ENCODE measurements at regions of chr14 and their contacts with region 1.

Region 1: GRCh38 chr14:91323671-91324605 is 79.4 kb upstream of the GPR68 start:
- DNase-seq: peak; percentile 43
- H3K4me3 ChIP-seq: no peak overlapping the region
- H3K27ac ChIP-seq: no peak overlapping the region
- H3K4me1 ChIP-seq: no peaks in the 10 kb centered on the region
- H3K27me3 ChIP-seq: no peaks in the 10 kb centered on the region
- CTCF ChIP-seq: peak; percentile 79 to 92

Region 2: DNA sequence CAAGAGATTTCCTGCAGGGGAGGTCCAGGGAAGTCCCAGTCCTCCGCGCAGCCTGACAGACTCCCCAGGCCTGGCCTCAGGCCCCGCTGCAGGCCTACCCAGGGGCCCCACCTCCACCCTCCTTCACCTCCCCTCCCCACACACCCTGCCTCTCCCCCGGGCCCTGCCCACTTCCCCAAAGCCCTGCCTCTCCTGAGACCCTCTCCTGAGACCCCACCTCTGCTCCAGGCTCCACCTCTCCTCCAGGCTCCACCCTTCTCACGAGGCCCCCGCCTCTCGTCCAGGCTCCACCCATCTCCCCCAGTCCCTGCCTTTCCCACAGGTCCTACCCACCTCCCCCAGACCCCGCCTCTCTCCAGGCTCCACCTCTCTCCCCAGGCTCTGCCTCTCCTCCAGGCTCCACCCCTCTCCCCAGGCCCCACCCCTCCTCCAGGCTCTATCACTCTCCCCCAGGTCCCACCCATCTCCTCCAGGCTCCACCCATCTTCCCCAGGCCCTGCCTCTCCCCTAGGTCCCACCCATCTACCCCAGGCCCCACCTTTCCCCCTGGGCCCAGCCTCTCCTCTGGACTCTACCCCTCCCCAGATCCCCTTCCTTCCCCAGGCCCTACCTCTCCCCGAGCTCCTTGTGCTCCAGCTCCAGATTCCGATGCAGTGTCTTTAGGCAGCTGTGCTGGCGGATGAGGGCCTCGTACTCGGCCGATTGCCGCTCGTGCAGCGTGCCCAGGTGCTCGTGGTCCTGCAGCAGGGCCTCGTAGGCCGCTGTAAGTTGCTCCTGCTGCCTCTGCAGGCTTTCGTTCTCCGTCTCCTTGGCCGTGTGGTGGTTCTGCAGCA is 20.6 kb before region 1 on chr14:
- CTCF ChIA-PET with region 1: no interaction called
- dilution Hi-C with region 1: no loop called
- in situ Hi-C with region 1: no loop called
- intact Hi-C with region 1: no loop called
- DNase-seq: no peak
- H3K4me3 ChIP-seq: no peak overlapping the region
- H3K27ac ChIP-seq: no peak overlapping the region
- H3K4me1 ChIP-seq: no peaks in the 10 kb centered on the region
- H3K27me3 ChIP-seq: no peaks in the 10 kb centered on the region
- CTCF ChIP-seq: no peak

Region 3: GRCh38 chr14:91396959-91397815 is 73.2 kb after region 1 on chr14:
- CTCF ChIA-PET with region 1: no interaction called
- dilution Hi-C with region 1: no loop called
- in situ Hi-C with region 1: no loop called
- intact Hi-C with region 1: loop called (anchors 2 kb)
- DNase-seq: no peak
- H3K4me3 ChIP-seq: no peak overlapping the region
- H3K27ac ChIP-seq: no peak overlapping the region
- H3K4me1 ChIP-seq: peaks cover 16% of the 10 kb centered on the region
- H3K27me3 ChIP-seq: no peaks in the 10 kb centered on the region
- CTCF ChIP-seq: no peak

Region 4: DNA sequence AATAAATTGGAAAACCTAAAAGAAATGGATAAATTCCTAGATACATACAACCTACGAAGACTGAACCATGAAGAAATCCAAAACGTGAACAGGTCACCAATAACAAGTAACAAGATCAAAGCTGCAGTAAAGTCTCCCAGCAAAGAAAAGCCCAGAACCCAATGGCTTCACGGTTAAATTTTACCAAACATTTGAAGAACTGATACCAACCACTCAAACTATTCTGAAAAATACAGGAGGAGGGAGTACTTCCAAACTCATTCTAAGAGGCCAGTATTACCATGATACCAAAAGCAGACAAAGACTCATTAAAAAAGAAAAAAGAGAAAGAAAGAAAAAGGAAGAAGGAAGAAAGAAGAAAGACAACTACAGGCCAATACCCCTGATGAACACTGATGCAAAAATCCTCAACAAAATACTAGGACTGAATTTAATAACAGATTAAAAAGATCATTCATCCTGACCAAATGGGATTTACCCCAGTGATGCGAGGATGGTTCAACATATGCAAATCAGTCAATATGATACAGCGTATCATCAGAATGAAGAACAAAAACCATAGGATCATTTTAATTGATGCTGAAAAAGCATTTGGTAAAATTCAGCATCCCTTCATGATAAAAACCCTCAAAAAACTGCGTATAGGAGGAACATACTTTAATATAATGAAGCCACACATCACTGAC is 120.5 kb after region 1 on chr14:
- CTCF ChIA-PET with region 1: no interaction called
- dilution Hi-C with region 1: no loop called
- in situ Hi-C with region 1: loop called in 1 of 2 experiments (anchors 10 kb)
- intact Hi-C with region 1: no loop called
- DNase-seq: no peak
- H3K4me3 ChIP-seq: no peak overlapping the region
- H3K27ac ChIP-seq: no peak overlapping the region
- H3K4me1 ChIP-seq: no peaks in the 10 kb centered on the region
- H3K27me3 ChIP-seq: peaks cover 2% of the 10 kb centered on the region
- CTCF ChIP-seq: no peak

Region 5: GRCh38 chr14:91899212-91899611 is 575.3 kb after region 1 on chr14:
- CTCF ChIA-PET with region 1: no interaction called
- dilution Hi-C with region 1: no loop called
- in situ Hi-C with region 1: no loop called
- intact Hi-C with region 1: loop called (anchors 1 kb)
- DNase-seq: no peak
- H3K4me3 ChIP-seq: no peak overlapping the region
- H3K27ac ChIP-seq: no peak overlapping the region
- H3K4me1 ChIP-seq: no peaks in the 10 kb centered on the region
- H3K27me3 ChIP-seq: no peaks in the 10 kb centered on the region
- CTCF ChIP-seq: no peak

Measured in mammary epithelial cell (primary cell).